CD8-positive, alpha-beta T cell (primary cell): ENCODE measurements at regions of chr1 and their contacts with region 1.

Region 1: GRCh38 chr1:23979878-23980724 is at the start of gene SRSF10:
- DNase-seq: peak; percentile 94 to 100 (median 97)
- ATAC-seq: peak; percentile 96
- H3K4me3 ChIP-seq: peak within 1 kb of the TSS; percentile 87 to 94
- H3K4me3 Mint-ChIP-seq: peak within 1 kb of the TSS; percentile 92
- H3K27ac ChIP-seq: peak within 1 kb of the TSS; percentile 92 to 98
- H3K27ac Mint-ChIP-seq: peak within 1 kb of the TSS; percentile 92
- H3K4me1 ChIP-seq: peaks cover 41% of the 10 kb centered on the region
- H3K4me1 Mint-ChIP-seq: peaks cover 52% of the 10 kb centered on the region
- H3K27me3 ChIP-seq: no peaks in the 10 kb centered on the region
- H3K27me3 Mint-ChIP-seq: no peaks in the 10 kb centered on the region
- CTCF ChIP-seq: peak; percentile 18
- total RNA-seq, gene SRSF10: 321 to 335 TPM

Region 2: DNA sequence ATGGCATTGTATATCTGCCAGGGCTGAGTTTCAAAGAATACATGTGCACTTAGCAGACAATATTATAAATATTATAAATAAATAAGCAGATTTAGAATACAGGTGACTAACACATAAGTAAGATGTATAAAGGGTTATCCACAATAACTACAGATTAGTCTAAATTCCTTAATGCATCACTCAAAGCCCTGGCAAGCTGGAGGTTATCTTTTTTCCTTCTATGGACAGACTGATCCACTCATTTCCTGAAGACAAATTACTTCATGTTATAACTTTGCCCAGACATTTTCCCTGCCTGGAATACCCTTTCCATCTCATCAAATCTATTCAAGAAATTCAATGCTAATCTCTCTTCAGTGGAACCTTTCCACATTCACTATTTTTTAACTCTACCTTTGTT is 850.3 kb before region 1 on chr1:
- CTCF ChIA-PET with region 1: no interaction called
- POLR2A ChIA-PET with region 1: no interaction called
- intact Hi-C with region 1: no loop called
- DNase-seq: no peak
- ATAC-seq: no peak
- H3K4me3 ChIP-seq: no peak overlapping the region
- H3K4me3 Mint-ChIP-seq: no peak overlapping the region
- H3K27ac ChIP-seq: no peak overlapping the region
- H3K27ac Mint-ChIP-seq: no peak overlapping the region
- H3K4me1 ChIP-seq: no peaks in the 10 kb centered on the region
- H3K4me1 Mint-ChIP-seq: peaks cover 21% of the 10 kb centered on the region
- H3K27me3 ChIP-seq: no peaks in the 10 kb centered on the region
- H3K27me3 Mint-ChIP-seq: no peaks in the 10 kb centered on the region
- CTCF ChIP-seq: no peak

Region 3: GRCh38 chr1:23964790-23965740 is 15.0 kb before region 1 on chr1:
- CTCF ChIA-PET with region 1: interaction called, 4 read pairs
- POLR2A ChIA-PET with region 1: interaction called, 24 read pairs
- intact Hi-C with region 1: loop called in 1 of 2 experiments (anchors 1 kb)
- DNase-seq: no peak
- ATAC-seq: no peak
- H3K4me3 ChIP-seq: no peak overlapping the region
- H3K4me3 Mint-ChIP-seq: no peak overlapping the region
- H3K27ac ChIP-seq: peak overlapping the region in 1 of 2 experiments; percentile 28
- H3K27ac Mint-ChIP-seq: peak overlapping the region; percentile 14
- H3K4me1 ChIP-seq: peaks cover 12% of the 10 kb centered on the region
- H3K4me1 Mint-ChIP-seq: peaks cover 66% of the 10 kb centered on the region
- H3K27me3 ChIP-seq: no peaks in the 10 kb centered on the region
- H3K27me3 Mint-ChIP-seq: no peaks in the 10 kb centered on the region
- CTCF ChIP-seq: no peak

Region 4: DNA sequence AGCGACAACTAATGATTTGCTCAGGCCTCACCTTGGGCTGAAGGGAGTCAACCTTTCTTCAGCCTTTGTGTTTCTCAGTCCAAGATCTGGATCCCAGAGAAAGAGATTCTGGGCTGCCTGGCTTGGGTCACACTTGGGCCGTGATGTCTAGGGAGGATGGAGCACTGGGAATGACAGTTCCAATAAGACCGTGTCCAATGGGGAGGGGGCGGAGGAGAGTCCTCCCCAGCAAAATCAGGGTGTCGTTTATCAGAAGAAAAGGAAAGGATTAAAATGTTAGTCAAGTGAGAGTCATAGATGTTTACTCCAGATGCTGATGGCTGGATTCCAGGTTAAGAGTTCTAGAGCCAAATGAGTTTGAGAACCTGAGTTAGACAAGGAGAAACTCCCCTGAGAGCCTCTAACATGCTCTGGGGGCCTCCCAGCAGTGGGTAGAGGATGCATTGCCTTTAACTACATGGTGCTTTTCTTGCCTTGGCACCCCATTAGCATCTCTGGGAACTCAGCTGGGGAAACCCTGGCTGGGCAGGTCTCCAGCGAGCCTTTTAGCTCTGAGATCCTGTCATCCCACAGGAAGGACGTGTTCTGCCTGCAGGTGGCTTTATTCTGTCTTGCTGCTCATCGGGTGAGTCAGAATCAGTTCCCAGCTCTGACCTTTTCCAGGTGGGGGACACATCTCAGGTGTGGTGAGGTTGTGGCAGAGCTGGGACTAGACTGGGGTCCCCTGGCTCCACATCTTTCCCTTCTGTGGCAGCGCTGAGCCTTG is 457.7 kb after region 1 on chr1:
- CTCF ChIA-PET with region 1: no interaction called
- POLR2A ChIA-PET with region 1: no interaction called
- intact Hi-C with region 1: no loop called
- DNase-seq: no peak
- ATAC-seq: no peak
- H3K4me3 ChIP-seq: no peak overlapping the region
- H3K4me3 Mint-ChIP-seq: no peak overlapping the region
- H3K27ac ChIP-seq: no peak overlapping the region
- H3K27ac Mint-ChIP-seq: peak overlapping the region; percentile 72
- H3K4me1 ChIP-seq: peaks cover 4% of the 10 kb centered on the region
- H3K4me1 Mint-ChIP-seq: peaks cover 37% of the 10 kb centered on the region
- H3K27me3 ChIP-seq: no peaks in the 10 kb centered on the region
- H3K27me3 Mint-ChIP-seq: no peaks in the 10 kb centered on the region
- CTCF ChIP-seq: no peak

Region 5: DNA sequence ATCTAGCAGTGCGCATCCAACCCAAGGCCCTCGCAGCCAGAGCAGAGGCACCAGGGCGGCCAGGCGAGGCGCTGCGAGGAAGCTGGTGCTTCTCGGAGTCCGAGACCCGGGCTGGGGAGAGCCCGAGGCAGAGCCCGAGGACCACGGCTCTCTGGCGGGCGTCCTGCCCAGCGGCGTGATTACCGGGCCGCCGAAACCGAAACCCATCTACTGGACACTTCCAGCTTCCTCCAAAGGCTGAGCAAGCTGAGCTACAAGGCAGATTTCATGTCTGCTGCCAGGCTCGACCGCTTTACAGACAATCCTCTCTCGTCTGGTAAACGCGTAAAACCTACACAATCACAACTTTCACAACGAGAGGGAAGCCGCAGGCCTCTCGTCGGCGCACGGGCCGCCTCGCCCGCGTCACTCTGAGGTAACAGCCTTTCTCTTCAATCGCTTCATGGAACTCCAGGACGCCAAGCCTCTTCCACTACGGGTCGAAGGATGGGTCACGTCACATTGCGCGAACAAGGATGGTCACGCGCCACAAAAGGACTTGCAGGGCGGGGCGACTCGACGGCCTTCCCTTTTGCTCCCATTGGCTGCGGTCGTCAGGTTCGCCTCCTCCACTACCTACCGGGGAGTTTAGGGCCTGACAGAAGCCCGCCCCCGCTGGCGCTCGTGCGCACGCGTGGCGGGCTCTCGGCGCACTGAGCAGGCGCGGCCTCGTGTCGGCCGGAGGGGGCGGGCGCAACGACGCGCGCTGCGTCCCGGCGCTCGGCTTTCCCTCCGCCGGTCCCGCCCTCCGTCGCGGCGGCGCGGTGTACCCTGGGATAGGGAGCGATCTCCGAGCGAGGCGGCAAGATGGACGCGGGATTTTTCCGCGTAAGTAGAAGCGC is 662.6 kb after region 1 on chr1 and contains the start of gene SRRM1:
- CTCF ChIA-PET with region 1: no interaction called
- POLR2A ChIA-PET with region 1: no interaction called
- intact Hi-C with region 1: loop called in 1 of 2 experiments (anchors 5 kb)
- DNase-seq: peak; percentile 96 to 100 (median 98)
- ATAC-seq: peak; percentile 86
- H3K4me3 ChIP-seq: peak within 1 kb of the TSS; percentile 89 to 98
- H3K4me3 Mint-ChIP-seq: peak within 1 kb of the TSS; percentile 88
- H3K27ac ChIP-seq: peak within 1 kb of the TSS; percentile 98 to 100
- H3K27ac Mint-ChIP-seq: peak within 1 kb of the TSS; percentile 99
- H3K4me1 ChIP-seq: peaks cover 32% of the 10 kb centered on the region
- H3K4me1 Mint-ChIP-seq: peaks cover 41% of the 10 kb centered on the region
- H3K27me3 ChIP-seq: no peaks in the 10 kb centered on the region
- H3K27me3 Mint-ChIP-seq: no peaks in the 10 kb centered on the region
- CTCF ChIP-seq: no peak
- total RNA-seq, gene SRRM1: 460 to 474 TPM